GM12878 (cell line): ENCODE measurements at regions of chr6 and their contacts with region 1.

Region 1: GRCh38 chr6:139250296-139251044 is 41.3 kb downstream of the TXLNB start:
- DNase-seq: no peak
- ATAC-seq: peak; percentile 99
- H3K4me3 ChIP-seq: no peak overlapping the region
- H3K27ac ChIP-seq: no peak overlapping the region; the same call in 1 of the 2 replicates
- H3K4me1 ChIP-seq: peaks cover 13% of the 10 kb centered on the region
- H3K27me3 ChIP-seq: no peaks in the 10 kb centered on the region
- CTCF ChIP-seq: peak; percentile 63 to 89 (median 79)
- EP300 ChIP-seq: no peak
- POLR2A ChIP-seq: no peak
- RAD21 ChIP-seq: peak; percentile 59

Region 2: DNA sequence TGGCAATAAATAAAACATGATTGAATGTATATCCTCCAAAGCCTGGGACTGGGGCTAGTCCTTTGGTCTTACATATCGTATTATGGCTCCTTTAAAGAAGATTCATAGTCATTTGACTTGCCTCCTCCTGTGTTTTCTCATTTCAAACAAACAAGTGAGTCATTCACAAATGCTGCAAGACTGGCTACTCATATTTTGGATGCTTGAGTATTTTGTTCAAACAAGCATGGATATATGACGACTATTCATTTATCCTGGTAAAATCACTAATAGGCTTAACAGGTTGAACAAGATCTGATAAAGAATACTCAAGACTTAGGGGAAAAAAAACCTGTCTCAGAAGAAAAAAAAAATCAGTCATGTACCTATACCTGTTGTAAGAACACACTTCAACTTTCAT is 588.0 kb before region 1 on chr6:
- CTCF ChIA-PET with region 1: no interaction called
- POLR2A ChIA-PET with region 1: no interaction called
- RAD21 ChIA-PET with region 1: no interaction called
- SMC1A ChIA-PET with region 1: no interaction called
- in situ Hi-C with region 1: no loop called
- intact Hi-C with region 1: no loop called
- DNase-seq: no peak
- ATAC-seq: no peak
- H3K4me3 ChIP-seq: no peak overlapping the region
- H3K27ac ChIP-seq: no peak overlapping the region
- H3K4me1 ChIP-seq: no peaks in the 10 kb centered on the region
- H3K27me3 ChIP-seq: peaks cover 0 to 3% of the 10 kb centered on the region in 2 experiments; a peak in 1 of 4 replicates
- CTCF ChIP-seq: no peak
- EP300 ChIP-seq: no peak
- POLR2A ChIP-seq: no peak
- RAD21 ChIP-seq: no peak

Region 3: GRCh38 chr6:139135621-139136575 is 114.6 kb before region 1 on chr6:
- CTCF ChIA-PET with region 1: no interaction called
- POLR2A ChIA-PET with region 1: no interaction called
- RAD21 ChIA-PET with region 1: no interaction called
- SMC1A ChIA-PET with region 1: no interaction called
- in situ Hi-C with region 1: no loop called
- intact Hi-C with region 1: no loop called
- DNase-seq: no peak
- ATAC-seq: peak; percentile 63
- H3K4me3 ChIP-seq: peak overlapping the region; percentile 87
- H3K27ac ChIP-seq: peak overlapping the region; percentile 35
- H3K4me1 ChIP-seq: peaks cover 6% of the 10 kb centered on the region
- H3K27me3 ChIP-seq: no peaks in the 10 kb centered on the region
- CTCF ChIP-seq: no peak; a peak in 1 of 6 replicates
- EP300 ChIP-seq: no peak
- POLR2A ChIP-seq: no peak
- RAD21 ChIP-seq: no peak

Region 4: GRCh38 chr6:139262519-139263300 is 12.2 kb after region 1 on chr6:
- CTCF ChIA-PET with region 1: interaction called, 11 read pairs
- POLR2A ChIA-PET with region 1: interaction called, 3 read pairs
- RAD21 ChIA-PET with region 1: interaction called, 7 read pairs
- SMC1A ChIA-PET with region 1: interaction called, 7 read pairs
- in situ Hi-C with region 1: no loop called
- intact Hi-C with region 1: no loop called
- DNase-seq: no peak
- ATAC-seq: peak; percentile 94
- H3K4me3 ChIP-seq: no peak overlapping the region
- H3K27ac ChIP-seq: no peak overlapping the region
- H3K4me1 ChIP-seq: no peaks in the 10 kb centered on the region
- H3K27me3 ChIP-seq: no peaks in the 10 kb centered on the region
- CTCF ChIP-seq: no peak
- EP300 ChIP-seq: peak in 1 of 2 experiments; percentile 15; a peak in 1 of 4 replicates
- POLR2A ChIP-seq: no peak
- RAD21 ChIP-seq: no peak

Region 5: DNA sequence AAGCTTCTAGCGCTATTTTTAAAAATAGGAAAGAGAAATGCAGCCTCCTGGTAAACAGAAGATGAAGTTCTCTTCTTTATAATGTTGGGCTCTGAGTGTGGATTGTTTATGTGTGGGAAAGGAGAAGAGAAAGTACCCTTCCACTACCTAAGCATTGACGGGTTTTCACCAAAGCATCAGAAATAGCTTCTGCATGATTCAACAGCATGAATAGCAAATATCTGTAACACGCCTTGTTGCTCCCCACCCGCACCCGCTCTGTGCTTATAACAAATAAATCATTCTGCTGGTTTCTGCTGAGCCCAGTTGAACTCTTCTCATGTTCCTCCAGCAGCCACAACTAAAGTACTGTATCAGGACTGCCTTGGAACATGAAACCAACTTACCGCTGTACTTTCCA is 20.6 kb after region 1 on chr6:
- CTCF ChIA-PET with region 1: interaction called, 10 read pairs
- POLR2A ChIA-PET with region 1: interaction called, 5 read pairs
- RAD21 ChIA-PET with region 1: interaction called, 3 read pairs
- SMC1A ChIA-PET with region 1: interaction called, 7 read pairs
- in situ Hi-C with region 1: no loop called
- intact Hi-C with region 1: no loop called
- DNase-seq: no peak
- ATAC-seq: peak; percentile 92
- H3K4me3 ChIP-seq: 0 out of 2 replicates have a peak overlapping the region, but pooled peaks have one; percentile 18
- H3K27ac ChIP-seq: peak overlapping the region; percentile 14; the same call in 1 of the 2 replicates
- H3K4me1 ChIP-seq: peaks cover 6% of the 10 kb centered on the region
- H3K27me3 ChIP-seq: no peaks in the 10 kb centered on the region
- CTCF ChIP-seq: no peak
- EP300 ChIP-seq: 0 out of 4 replicates have a peak, but pooled peaks of 1 of the 2 experiments have one; percentile 31
- POLR2A ChIP-seq: no peak
- RAD21 ChIP-seq: no peak

Region 6: GRCh38 chr6:139334806-139335446 is 84.5 kb after region 1 on chr6:
- CTCF ChIA-PET with region 1: interaction called, 14 read pairs
- POLR2A ChIA-PET with region 1: no interaction called
- RAD21 ChIA-PET with region 1: interaction called, 3 read pairs
- SMC1A ChIA-PET with region 1: interaction called, 3 read pairs
- in situ Hi-C with region 1: no loop called
- intact Hi-C with region 1: no loop called
- DNase-seq: no peak
- ATAC-seq: no peak
- H3K4me3 ChIP-seq: no peak overlapping the region
- H3K27ac ChIP-seq: no peak overlapping the region
- H3K4me1 ChIP-seq: peaks cover 7% of the 10 kb centered on the region; the same call in 1 of the 2 replicates
- H3K27me3 ChIP-seq: no peaks in the 10 kb centered on the region
- CTCF ChIP-seq: no peak
- EP300 ChIP-seq: no peak
- POLR2A ChIP-seq: no peak
- RAD21 ChIP-seq: no peak